ENCODE measurements at regions of chr19 and their contacts with region 1.

Region 1: GRCh38 chr19:14603990-14604387 is 21.1 kb downstream of the CLEC17A start:
- DNase-seq: no peak

Region 2: DNA sequence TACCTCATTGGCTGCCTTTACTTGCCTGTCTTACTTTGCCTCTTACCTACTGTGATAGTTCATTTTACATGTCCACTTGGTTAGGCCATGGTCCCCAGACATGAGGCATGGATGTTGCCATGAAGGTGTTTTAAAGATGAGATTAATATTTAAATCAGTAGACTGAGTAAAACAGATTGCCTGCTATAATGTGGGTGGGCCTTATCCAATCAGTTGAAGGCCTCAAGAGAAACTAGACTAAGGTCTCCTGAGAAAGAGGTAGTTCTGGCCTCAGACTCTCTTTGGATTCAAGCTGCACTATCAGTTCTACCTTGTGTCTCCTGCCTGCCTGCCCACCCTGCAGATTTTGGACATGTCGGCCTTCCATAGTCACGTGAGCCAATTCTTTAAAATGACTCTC is 44.5 kb after region 1 on chr19:
- intact Hi-C with region 1: loop called in 1 of 2 experiments (anchors 1 kb)
- DNase-seq: no peak

Measured in posterior vena cava (tissue), 2 donors.